Kidney (tissue), 22 donors: ENCODE measurements at regions of chr3 and their contacts with region 1.

Region 1: GRCh38 chr3:101819758-101820157 is 29.6 kb upstream of the NFKBIZ start:
- DNase-seq: no peak
- H3K4me3 ChIP-seq: no peak overlapping the region
- H3K27ac ChIP-seq: no peak overlapping the region
- H3K4me1 ChIP-seq: peaks cover 0 to 2% (median 0%) of the 10 kb centered on the region in 3 donors
- H3K27me3 ChIP-seq: no peaks in the 10 kb centered on the region
- CTCF ChIP-seq: no peak

Region 2: GRCh38 chr3:102224128-102224527 is 404.4 kb after region 1 on chr3:
- intact Hi-C with region 1: loop called (anchors 5 kb)
- DNase-seq: no peak
- H3K4me3 ChIP-seq: no peak overlapping the region
- H3K27ac ChIP-seq: no peak overlapping the region
- H3K4me1 ChIP-seq: peaks cover 0 to under 1% (median 0%) of the 10 kb centered on the region in 3 donors
- H3K27me3 ChIP-seq: no peaks in the 10 kb centered on the region
- CTCF ChIP-seq: peak; percentile 35